H1 (cell line): ENCODE measurements at regions of chr3 and their contacts with region 1.

Region 1: DNA sequence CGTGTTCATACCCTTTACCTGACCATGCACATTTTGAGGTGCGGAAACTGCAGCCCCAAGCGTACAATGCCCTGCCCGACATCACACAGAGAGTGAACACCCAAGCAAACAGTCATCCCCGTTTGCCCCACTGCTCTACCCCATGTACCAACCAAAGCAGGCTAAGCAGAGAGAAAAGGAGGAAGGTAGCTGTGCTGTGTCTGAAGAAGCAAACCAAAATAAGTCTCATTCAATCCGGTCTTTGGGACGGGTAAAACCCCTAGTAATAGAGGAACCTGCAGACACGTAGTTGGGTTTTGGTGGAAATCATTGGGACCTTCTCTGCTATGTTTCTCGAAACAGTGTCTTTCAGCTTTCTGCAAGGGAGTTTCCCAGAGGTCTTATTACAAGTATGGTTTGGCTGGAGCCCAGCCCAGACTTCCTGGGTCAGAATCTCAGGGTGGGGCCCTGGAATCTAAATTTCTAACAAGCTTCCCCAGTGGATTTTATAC is 164.6 kb upstream of the HES1 start:
- DNase-seq: no peak
- H3K4me3 ChIP-seq: no peak overlapping the region
- H3K27ac ChIP-seq: no peak overlapping the region
- H3K4me1 ChIP-seq: peaks cover 7 to 16% (median 14%) of the 10 kb centered on the region in 4 experiments
- H3K27me3 ChIP-seq: peaks cover 0 to 5% (median 2%) of the 10 kb centered on the region in 4 experiments; a peak in 3 of 7 replicates
- CTCF ChIP-seq: no peak
- EP300 ChIP-seq: no peak
- POLR2A ChIP-seq: no peak
- RAD21 ChIP-seq: no peak

Region 2: DNA sequence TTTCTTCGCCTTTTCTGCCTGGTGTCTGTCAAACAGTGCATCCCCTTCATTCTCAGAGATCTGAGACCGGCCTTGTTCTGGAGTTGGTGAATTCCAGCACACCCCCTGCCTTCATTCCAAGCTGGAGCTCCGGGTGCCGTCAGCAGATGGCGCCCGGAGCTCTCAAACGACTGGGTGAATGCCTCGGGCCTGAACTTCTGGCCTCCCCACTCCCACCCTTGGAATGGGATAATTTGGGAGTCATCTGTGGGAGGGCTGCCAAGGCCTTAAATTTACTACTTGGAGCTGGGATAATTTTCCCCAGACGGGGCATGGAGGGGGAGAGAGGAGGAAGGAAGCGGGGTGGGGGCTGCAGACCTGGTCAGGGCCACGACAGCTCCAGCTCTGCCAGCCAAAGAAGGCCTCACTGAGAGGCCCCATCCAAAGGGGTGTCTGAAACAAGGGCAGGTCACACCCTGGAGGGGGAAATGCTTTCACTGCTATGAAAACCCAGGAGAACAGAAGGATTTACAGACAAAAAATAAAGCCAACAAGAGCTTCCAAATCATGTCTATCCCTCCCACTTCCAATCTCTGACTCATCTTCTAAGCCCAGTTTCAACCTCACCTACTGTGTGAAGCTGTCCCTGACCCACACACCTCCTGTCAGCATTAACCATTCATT is 190.4 kb before region 1 on chr3:
- CTCF ChIA-PET with region 1: interaction called, 25 read pairs
- POLR2A ChIA-PET with region 1: no interaction called
- DNase-seq: peak; percentile 50 to 71
- H3K4me3 ChIP-seq: no peak overlapping the region
- H3K27ac ChIP-seq: no peak overlapping the region
- H3K4me1 ChIP-seq: peaks cover 12 to 21% (median 18%) of the 10 kb centered on the region in 4 experiments
- H3K27me3 ChIP-seq: peaks cover 0 to 20% (median 4%) of the 10 kb centered on the region in 4 experiments; a peak in 5 of 7 replicates
- CTCF ChIP-seq: peak; percentile 63 to 88 (median 73)
- EP300 ChIP-seq: no peak
- POLR2A ChIP-seq: no peak
- RAD21 ChIP-seq: peak; percentile 92 to 98

Region 3: DNA sequence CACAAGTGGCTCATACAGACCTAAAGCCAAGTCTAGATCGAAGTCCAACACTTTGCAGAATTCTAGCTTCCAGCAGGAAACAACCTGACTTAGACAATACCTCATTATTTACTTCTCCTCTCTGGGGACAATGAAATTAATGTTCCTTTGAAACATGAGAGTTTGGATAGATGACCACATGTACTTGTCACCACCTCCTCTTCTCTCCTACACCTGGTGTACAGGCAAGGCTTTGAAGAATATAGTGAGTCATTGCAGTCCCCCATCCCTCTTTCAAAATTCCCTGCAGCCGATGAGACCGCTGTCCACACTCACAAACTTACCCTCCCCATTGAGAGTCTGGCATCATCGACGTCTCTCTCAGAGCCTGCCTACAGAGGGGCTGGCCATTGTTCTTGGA is 24.4 kb before region 1 on chr3:
- CTCF ChIA-PET with region 1: interaction called, 15 read pairs
- POLR2A ChIA-PET with region 1: no interaction called
- DNase-seq: no peak
- H3K4me3 ChIP-seq: no peak overlapping the region
- H3K27ac ChIP-seq: no peak overlapping the region
- H3K4me1 ChIP-seq: peaks cover 13 to 34% (median 19%) of the 10 kb centered on the region in 4 experiments
- H3K27me3 ChIP-seq: peaks cover 0 to 2% (median 0%) of the 10 kb centered on the region in 4 experiments; a peak in 4 of 7 replicates
- CTCF ChIP-seq: no peak
- EP300 ChIP-seq: no peak
- POLR2A ChIP-seq: no peak
- RAD21 ChIP-seq: no peak

Region 4: DNA sequence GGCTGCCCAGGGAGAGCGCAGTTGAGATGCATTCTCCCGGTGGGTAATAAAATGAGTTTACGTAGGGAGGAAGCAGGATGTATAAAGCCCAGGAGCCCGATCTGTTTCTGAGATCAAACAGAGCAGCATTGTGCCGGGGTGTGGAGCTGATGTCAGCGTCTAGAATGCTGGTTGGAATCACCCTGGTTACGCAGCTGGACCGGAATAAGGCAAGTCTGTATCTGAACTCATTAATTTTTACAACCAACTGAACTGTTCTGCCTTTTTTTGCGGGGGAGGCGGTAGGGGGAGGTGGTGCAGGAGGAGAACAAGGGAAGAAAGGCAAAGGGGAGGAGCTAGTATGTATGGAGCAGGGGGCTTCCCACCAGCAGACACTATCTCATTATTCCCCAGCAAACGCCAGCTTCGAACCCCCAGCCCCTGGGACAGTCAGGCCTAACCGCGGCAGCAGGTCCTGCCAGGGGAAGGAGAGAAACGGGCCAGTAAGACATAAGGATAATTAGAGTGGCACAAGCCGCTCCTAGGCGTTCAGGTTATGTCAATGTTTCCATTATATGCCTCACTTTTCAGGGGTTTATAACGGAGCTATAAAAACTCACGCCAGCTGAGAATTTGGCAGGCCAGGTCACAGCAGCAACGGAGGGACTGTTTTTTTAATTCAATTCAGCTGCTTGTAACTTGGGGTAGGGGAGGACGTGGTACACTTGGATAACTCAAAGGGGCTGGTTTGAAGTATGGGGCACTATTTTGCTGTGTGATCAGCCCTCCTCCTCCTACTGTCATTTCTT is 10.6 kb before region 1 on chr3:
- CTCF ChIA-PET with region 1: interaction called, 49 read pairs
- POLR2A ChIA-PET with region 1: no interaction called
- DNase-seq: no peak
- H3K4me3 ChIP-seq: no peak overlapping the region
- H3K27ac ChIP-seq: no peak overlapping the region
- H3K4me1 ChIP-seq: peaks cover 0 to 6% (median 3%) of the 10 kb centered on the region in 4 experiments; a peak in 3 of 7 replicates
- H3K27me3 ChIP-seq: peaks cover 13 to 63% (median 38%) of the 10 kb centered on the region in 4 experiments
- CTCF ChIP-seq: no peak
- EP300 ChIP-seq: no peak
- POLR2A ChIP-seq: no peak
- RAD21 ChIP-seq: no peak